Aorta (tissue), 5 donors: ENCODE measurements at regions of chr3 and their contacts with region 1.

Region 1: GRCh38 chr3:52278510-52279069 is at the start of gene WDR82:
- DNase-seq: peak; percentile 98 to 100
- ATAC-seq: peak; percentile 98
- H3K4me3 ChIP-seq: peak within 1 kb of the TSS; percentile 61 to 98
- H3K27ac ChIP-seq: peak within 1 kb of the TSS; percentile 50 to 99
- H3K4me1 ChIP-seq: peaks cover 0 to 2% of the 10 kb centered on the region in 2 donors
- H3K27me3 ChIP-seq: peaks cover 0 to 1% of the 10 kb centered on the region in 2 donors
- total RNA-seq, gene WDR82: 58.1 to 72.4 TPM

Region 2: GRCh38 chr3:52238761-52239701 is 39.6 kb before region 1 on chr3 and contains the start of gene TWF2:
- intact Hi-C with region 1: loop called in 1 of 2 experiments (anchors 5 kb)
- DNase-seq: peak; percentile 87 to 94
- ATAC-seq: peak; percentile 93
- H3K4me3 ChIP-seq: peak within 1 kb of the TSS; percentile 52 to 89
- H3K27ac ChIP-seq: peak within 1 kb of the TSS in 1 of 2 donors; percentile 50
- H3K4me1 ChIP-seq: no peaks in the 10 kb centered on the region
- H3K27me3 ChIP-seq: no peaks in the 10 kb centered on the region
- total RNA-seq, gene TWF2: 40.5 to 52.2 TPM

Region 3: DNA sequence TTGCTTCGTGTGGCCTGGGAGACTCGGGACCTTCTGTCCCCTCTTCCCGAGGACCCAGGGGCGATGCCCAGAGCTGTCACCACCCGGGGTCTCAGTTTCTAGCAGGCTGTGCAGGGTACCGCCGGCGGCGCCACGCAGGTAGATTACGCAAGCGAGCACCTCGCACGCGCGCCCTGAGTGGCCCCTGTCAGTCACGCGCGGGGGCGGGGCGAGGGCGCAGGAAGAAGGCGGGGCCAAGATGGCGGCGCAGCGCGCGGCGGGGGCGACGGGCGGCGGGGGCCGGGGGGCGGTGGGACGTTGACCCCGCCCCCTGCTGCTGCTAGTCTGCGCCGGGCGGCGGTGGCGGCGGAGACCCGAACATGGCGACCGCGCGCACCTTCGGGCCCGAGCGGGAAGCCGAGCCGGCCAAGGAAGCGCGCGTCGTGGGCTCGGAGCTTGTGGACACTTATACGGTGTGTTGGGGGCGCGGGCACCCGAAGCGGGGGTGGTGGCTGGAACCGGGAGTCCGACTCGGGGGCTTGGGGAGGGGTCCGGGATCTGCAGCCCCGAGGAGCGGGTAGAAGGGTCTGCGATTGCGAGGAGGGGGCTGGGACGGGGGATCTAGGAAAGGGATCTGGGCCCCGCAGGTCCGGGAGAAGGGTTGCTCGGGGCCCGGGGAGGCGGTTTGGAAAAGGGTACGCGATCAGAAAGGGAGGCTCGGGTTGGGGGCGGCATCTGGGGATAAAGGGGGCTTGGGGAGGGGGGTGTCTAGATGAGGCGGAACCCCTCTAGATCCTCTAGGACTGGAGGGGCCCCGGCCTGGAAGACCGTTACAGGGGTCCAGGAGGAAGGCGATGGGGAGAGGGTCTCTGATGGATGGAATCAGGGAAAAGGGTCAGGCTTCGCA is 176.9 kb after region 1 on chr3 and contains the start of gene NISCH:
- intact Hi-C with region 1: loop called in 1 of 2 experiments (anchors 10 kb)
- DNase-seq: peak; percentile 93 to 97
- ATAC-seq: peak; percentile 93
- H3K4me3 ChIP-seq: peak within 1 kb of the TSS; percentile 67 to 86
- H3K27ac ChIP-seq: peak within 1 kb of the TSS; percentile 14 to 87
- H3K4me1 ChIP-seq: no peaks in the 10 kb centered on the region
- H3K27me3 ChIP-seq: no peaks in the 10 kb centered on the region
- total RNA-seq, gene NISCH: 80.9 to 157 TPM